ENCODE measurements at regions of chr5 and their contacts with region 1.

Region 1: DNA sequence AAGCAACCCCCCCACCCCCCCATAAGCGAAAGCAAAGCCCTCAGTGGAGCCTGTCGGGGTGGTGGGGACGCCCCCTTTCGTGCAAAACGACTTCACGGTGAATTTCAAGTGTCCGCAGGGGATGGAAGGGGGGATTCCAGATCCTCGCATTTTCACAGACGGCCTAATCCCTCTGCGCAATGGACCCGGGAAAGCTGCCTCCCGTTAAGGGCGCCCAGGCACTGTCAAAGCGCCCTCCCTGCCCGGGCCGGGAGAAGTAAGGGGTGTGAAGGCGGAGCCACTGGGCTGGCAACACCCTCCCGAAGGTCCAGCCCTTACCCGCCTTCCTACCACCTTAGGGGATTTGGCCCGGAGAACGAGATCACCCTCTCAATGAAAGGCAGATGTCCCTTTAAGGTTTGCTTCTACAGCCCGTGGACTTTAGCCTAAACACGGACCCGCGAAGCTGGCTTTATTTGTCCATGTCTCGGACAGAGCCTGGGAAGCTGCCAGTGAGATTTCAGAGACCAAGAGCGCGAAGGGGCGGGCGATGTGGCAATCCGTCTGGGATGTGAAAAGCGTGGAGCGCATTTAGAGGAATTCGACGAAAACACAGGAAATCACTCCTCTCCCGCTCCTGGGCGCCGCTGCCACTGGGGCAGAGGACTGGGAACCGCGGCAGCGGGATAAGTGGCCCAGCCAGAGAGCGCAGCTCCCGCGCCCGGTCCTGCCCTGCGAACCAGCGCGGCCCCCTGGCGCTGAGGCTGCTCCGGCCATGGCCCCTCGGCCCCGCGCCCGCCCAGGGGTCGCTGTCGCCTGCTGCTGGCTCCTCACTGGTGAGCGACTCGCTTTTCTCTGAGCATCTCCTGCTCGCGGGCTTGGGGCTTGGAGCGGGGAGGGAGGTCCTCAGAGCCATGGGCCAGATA is at the starts of genes ITGA1 and PELO:
- DNase-seq: peak; percentile 80 to 93 (median 87)
- H3K4me3 ChIP-seq: peak within 1 kb of the TSS; percentile 14 to 88 (median 57)
- H3K27ac ChIP-seq: peak within 1 kb of the TSS; percentile 51 to 94 (median 85)
- H3K4me1 ChIP-seq: peaks cover 0 to 45% of the 10 kb centered on the region in 2 donors
- H3K27me3 ChIP-seq: no peaks in the 10 kb centered on the region
- CTCF ChIP-seq: peak in 5 of 6 experiments; percentile 37 to 42 (median 40)
- POLR2A ChIP-seq: peak in 1 of 2 donors; percentile 82
- total RNA-seq, gene ITGA1: 137 to 371 (median 164) TPM
- total RNA-seq, gene PELO: 60.3 to 147 (median 89.4) TPM

Region 2: DNA sequence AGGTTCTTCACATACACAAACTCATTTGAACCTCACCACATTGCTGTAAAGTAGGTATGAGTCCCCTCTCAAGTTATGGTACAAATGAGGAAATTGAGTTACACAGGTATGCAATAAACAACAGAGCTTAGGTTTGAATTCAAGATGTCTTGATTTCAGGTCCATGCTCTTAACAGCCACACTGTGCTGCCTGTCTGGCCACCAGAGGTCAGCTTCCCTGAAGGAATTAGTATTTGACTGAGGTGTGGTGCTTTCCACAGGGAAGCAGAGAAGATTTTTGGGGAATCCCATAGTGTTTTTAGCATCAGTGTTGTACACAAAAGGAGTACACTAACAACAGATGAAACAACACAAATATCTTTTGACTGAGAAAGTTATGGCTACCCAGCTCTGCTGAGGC is 94.6 kb before region 1 on chr5:
- intact Hi-C with region 1: loop called (anchors 10 kb)
- DNase-seq: peak; percentile 46 to 82 (median 66)
- H3K4me3 ChIP-seq: no peak overlapping the region
- H3K27ac ChIP-seq: no peak overlapping the region
- H3K4me1 ChIP-seq: peaks cover 0 to 40% of the 10 kb centered on the region in 2 donors
- H3K27me3 ChIP-seq: no peaks in the 10 kb centered on the region
- CTCF ChIP-seq: peak; percentile 54 to 76 (median 68)
- POLR2A ChIP-seq: no peak

Region 3: DNA sequence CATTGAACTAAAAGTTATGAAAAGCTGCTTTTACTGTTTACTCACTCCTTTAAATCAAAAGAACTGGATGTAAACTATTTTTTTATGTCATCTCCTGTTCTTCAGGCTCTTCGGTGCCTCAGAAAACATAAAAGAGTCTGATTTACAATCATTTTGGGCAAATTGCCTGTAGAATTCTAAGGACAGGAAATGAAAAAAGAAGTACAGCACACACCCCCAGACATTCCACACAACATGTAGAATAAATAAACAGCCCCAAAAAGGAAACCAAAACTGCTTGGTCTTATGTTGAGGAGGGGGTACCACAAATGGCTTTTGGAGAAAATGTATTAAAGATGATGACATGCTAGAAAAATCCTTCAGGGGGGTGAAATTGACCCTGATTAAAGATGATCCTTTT is 57.0 kb after region 1 on chr5:
- intact Hi-C with region 1: no loop called
- DNase-seq: no peak
- H3K4me3 ChIP-seq: no peak overlapping the region
- H3K27ac ChIP-seq: peak overlapping the region in 3 of 5 donors; percentile 1 to 64 (median 19)
- H3K4me1 ChIP-seq: peaks cover 14 to 46% of the 10 kb centered on the region in 2 donors
- H3K27me3 ChIP-seq: no peaks in the 10 kb centered on the region
- CTCF ChIP-seq: no peak
- POLR2A ChIP-seq: no peak

Measured in adrenal gland (tissue), 19 donors.